Heart left ventricle (tissue), 16 donors: ENCODE measurements at regions of chr14 and their contacts with region 1.

Region 1: GRCh38 chr14:30982533-30982932 is 42.9 kb upstream of the AP4S1 start:
- DNase-seq: no peak
- ATAC-seq: no peak
- H3K4me3 ChIP-seq: no peak overlapping the region
- H3K27ac ChIP-seq: no peak overlapping the region
- H3K4me1 ChIP-seq: peaks cover 0 to 29% (median 0%) of the 10 kb centered on the region in 12 donors
- H3K27me3 ChIP-seq: no peaks in the 10 kb centered on the region
- CTCF ChIP-seq: no peak
- POLR2A ChIP-seq: no peak

Region 2: DNA sequence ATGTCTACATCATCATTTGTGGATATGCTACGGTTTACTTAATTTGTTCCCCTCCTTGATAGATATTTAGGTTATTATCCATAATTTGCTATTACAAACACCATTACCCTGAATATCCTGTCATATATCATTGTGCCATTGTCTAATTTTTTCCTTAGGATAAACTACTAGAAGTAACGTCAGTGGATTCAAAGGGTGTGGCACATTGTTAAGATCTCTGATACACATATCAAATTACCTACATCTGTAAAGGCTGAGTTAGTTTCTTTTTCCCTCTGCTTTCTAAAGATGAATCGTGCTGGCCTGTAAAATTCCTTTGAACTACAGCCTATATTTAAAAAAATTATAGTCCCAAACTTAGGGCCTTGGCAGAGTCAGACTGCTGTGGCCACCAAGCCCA is 97.5 kb after region 1 on chr14:
- intact Hi-C with region 1: loop called (anchors 2 kb)
- DNase-seq: no peak
- ATAC-seq: no peak
- H3K4me3 ChIP-seq: no peak overlapping the region
- H3K27ac ChIP-seq: no peak overlapping the region
- H3K4me1 ChIP-seq: peaks cover 0 to 15% (median 7%) of the 10 kb centered on the region in 12 donors
- H3K27me3 ChIP-seq: no peaks in the 10 kb centered on the region
- CTCF ChIP-seq: no peak
- POLR2A ChIP-seq: no peak